ENCODE measurements at regions of chr10 and their contacts with region 1.

Region 1: DNA sequence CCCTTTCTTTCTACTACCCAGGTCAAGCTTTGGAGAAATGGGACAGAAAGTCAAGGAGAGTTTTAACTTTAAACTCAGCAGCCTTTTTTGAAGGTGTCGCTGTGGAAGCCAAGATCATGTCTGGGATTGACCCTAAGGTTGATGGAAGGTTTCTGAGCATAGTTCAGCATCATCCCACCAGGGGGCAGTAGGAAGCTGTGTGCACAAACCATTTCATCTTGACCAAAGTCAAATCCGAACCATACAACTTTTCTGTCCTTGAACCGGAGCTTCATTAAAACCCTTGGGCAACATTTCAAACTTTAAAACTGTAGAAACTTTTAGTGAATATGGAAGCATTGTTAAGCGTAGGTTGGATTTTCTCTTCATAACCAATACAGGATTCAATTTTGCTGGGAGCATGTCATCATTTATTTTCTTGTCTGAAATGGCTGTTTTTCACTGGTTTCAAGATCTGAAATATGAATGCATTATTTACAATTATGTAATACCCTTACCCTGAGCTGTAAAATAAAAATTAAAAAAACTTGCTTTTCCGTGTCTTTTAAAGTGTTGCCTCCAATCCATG is 214.4 kb upstream of the KIAA1217 start:
- DNase-seq: peak; percentile 49
- CTCF ChIP-seq: peak; percentile 69

Region 2: GRCh38 chr10:23981520-23982309 is 12.8 kb before region 1 on chr10:
- CTCF ChIA-PET with region 1: interaction called, 15 read pairs
- POLR2A ChIA-PET with region 1: no interaction called
- DNase-seq: no peak
- CTCF ChIP-seq: no peak

Region 3: DNA sequence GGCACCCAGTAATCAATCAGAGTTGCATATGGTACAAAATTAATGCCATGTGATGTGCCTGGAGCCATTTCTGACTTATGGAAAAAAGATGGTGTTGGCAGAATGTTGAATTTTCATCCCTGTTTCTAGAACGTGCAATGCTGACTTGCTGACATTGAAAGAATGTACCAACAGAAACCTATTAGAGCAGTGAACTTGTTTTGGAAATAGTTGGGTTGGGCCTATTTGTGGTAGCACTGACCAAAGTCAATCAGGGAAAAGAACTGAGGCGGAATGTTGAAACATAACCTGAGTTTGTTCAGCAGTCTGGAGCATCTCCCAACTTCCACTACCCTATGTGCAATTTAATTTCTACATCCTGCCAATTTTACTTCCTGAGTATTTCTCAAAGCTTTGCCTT is 202.7 kb after region 1 on chr10:
- CTCF ChIA-PET with region 1: interaction called, 23 read pairs
- POLR2A ChIA-PET with region 1: no interaction called
- DNase-seq: no peak
- CTCF ChIP-seq: no peak

Region 4: GRCh38 chr10:24513155-24513554 is 518.6 kb after region 1 on chr10:
- CTCF ChIA-PET with region 1: interaction called, 53 read pairs
- POLR2A ChIA-PET with region 1: no interaction called
- DNase-seq: no peak
- CTCF ChIP-seq: peak; percentile 29

Region 5: GRCh38 chr10:24528946-24529345 is 534.4 kb after region 1 on chr10:
- CTCF ChIA-PET with region 1: interaction called, 11 read pairs
- POLR2A ChIA-PET with region 1: no interaction called
- DNase-seq: no peak
- CTCF ChIP-seq: no peak

Measured in GM10248 (cell line).